Activated T-helper 2 cell treated with anti-CD3 and anti-CD28 coated beads, Interferon-gamma antibody, Interleukin-2, Interleukin-4, amounts not matched to agents 10 μg/mL and 5 μg/mL and 100 μg/mL, durations not matched to agents 14 hours and 24 hours and 36 hours (primary cell): ENCODE measurements at regions of chr22 and their contacts with region 1.

Region 1: DNA sequence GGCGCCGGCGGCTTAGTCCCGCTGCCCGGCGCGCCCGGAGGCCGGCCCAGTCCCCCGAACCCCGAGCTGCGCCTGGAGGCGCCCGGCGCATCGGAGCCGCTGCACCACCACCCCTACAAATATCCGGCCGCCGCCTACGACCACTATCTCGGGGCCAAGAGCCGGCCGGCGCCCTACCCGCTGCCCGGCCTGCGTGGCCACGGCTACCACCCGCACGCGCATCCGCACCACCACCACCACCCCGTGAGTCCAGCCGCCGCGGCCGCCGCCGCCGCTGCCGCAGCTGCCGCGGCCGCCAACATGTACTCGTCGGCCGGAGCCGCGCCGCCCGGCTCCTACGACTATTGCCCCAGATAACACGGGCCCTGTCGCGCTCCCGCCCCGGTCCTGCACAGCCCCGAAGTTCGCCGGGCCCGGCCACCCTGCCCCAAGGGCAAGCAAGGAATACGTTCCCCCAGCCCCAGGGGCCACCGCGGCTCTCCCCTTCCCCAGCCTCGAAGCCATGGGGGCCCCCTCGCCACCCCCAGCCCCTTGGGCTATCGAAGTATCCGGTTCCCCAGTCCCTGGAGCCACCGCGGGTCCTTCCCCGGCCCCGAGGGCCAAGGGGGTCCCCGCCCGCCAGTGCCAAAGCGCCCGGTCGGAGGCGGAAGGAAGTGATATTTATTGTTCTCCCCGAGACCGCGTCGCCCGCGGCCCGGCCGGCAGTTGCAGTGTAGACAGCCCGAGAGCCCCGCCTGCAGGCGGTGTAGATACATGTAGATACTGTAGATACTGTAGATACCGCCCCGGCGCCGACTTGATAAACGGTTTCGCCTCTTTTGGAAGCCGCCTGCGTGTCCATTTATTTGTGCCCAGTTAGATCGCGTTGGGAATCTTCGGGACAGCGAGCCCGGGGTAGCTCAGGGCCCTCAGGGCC is 6.2 kb downstream of the TBX1 start:
- DNase-seq: peak; percentile 46
- H3K4me3 Mint-ChIP-seq: peak overlapping the region; percentile 30
- H3K27ac Mint-ChIP-seq: no peak overlapping the region
- H3K4me1 Mint-ChIP-seq: no peaks in the 10 kb centered on the region
- H3K27me3 Mint-ChIP-seq: peaks cover 58% of the 10 kb centered on the region

Region 2: DNA sequence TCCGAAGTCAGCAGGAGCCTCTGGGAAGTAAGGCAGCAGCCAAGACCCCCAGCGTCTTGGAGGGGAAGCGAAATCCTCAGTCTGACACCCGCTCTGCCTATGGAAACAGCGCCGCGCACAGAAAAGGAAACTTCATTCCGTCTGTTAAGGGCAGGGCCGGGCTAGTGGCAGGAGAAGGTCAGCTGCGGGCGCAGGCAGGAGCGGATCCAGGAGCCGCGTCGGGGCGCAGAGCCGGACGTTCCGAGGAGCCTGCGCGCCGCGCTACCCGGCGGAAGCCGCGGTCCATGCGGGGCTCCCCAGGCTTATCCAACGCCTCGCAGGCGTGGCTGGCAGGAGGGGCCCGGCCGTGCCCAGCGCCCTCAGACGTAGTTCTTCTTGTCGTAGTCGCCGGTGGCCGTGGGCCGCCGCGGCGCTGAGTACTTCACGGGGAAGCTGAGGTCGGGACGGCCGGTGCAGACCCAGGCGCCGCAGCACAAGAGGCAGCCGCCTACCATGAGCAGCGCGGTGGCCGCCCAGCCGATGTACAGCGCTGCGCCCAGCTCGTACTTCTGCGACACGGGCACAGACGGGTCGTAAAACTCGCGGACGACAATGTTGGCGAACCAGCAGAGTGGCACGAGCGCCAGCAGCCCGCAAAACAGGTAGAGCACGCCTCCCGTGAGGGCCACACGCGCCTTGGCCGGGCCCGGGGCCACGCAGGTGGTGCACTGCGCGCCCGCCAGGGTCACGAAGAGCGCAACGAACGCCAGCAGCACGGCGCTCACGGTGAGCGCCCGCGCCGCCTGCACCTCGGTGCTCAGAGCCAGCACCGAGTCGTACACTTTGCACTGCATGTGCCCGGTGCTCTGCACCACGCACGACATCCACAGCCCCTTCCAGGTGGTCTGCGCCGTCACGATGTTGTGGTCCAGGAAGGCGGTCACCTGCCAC is 243.3 kb before region 1 on chr22:
- intact Hi-C with region 1: loop called (anchors 5 kb)
- DNase-seq: no peak
- H3K4me3 Mint-ChIP-seq: peak overlapping the region; percentile 65
- H3K27ac Mint-ChIP-seq: no peak overlapping the region
- H3K4me1 Mint-ChIP-seq: peaks cover 5% of the 10 kb centered on the region
- H3K27me3 Mint-ChIP-seq: peaks cover 12% of the 10 kb centered on the region

Region 3: GRCh38 chr22:19723983-19724827 is 42.6 kb before region 1 on chr22:
- intact Hi-C with region 1: loop called (anchors 5 kb)
- DNase-seq: peak; percentile 19
- H3K4me3 Mint-ChIP-seq: no peak overlapping the region
- H3K27ac Mint-ChIP-seq: no peak overlapping the region
- H3K4me1 Mint-ChIP-seq: no peaks in the 10 kb centered on the region
- H3K27me3 Mint-ChIP-seq: peaks cover 48% of the 10 kb centered on the region